Colonic mucosa (tissue), 4 donors: ENCODE measurements at regions of chr6 and their contacts with region 1.

Region 1: DNA sequence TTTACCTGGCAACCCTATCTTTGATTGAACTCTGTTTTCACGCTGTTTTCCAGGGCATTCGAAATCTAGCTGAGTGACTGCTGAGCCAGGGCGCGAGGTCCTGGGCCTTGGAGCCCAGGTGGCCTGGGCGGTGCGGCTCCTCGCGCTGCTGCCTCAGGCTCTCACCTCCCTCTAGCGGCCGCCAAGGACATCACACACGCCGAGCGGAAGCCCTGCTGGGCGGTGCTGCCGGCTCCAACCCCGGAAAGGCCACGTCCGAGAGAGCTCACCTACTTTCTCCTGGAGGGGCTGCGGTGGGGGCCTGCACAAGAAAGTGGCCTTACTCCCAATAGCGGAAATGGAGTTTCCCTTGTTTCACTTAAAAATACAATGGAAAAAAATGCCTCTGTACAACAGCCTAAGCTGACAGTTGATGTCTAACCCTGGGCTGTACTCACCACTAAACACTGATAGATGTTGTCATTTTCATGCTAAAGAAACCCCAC is 77.7 kb downstream of the ELOVL4 start:
- DNase-seq: peak; percentile 86
- H3K4me3 ChIP-seq: peak overlapping the region; percentile 12
- H3K27ac ChIP-seq: no peak overlapping the region
- H3K4me1 ChIP-seq: no peaks in the 10 kb centered on the region
- H3K27me3 ChIP-seq: no peaks in the 10 kb centered on the region
- CTCF ChIP-seq: peak; percentile 93

Region 2: GRCh38 chr6:79079561-79080041 is 790.0 kb before region 1 on chr6:
- intact Hi-C with region 1: no loop called
- DNase-seq: no peak
- H3K4me3 ChIP-seq: peak overlapping the region; percentile 75
- H3K27ac ChIP-seq: no peak overlapping the region
- H3K4me1 ChIP-seq: peaks cover 9% of the 10 kb centered on the region
- H3K27me3 ChIP-seq: no peaks in the 10 kb centered on the region
- CTCF ChIP-seq: no peak

Region 3: GRCh38 chr6:79777713-79778579 is 91.7 kb before region 1 on chr6:
- intact Hi-C with region 1: loop called (anchors 5 kb)
- DNase-seq: peak; percentile 79
- H3K4me3 ChIP-seq: peak overlapping the region; percentile 19
- H3K27ac ChIP-seq: no peak overlapping the region
- H3K4me1 ChIP-seq: no peaks in the 10 kb centered on the region
- H3K27me3 ChIP-seq: no peaks in the 10 kb centered on the region
- CTCF ChIP-seq: peak; percentile 99